Natural killer cell (primary cell): ENCODE measurements at regions of chr2 and their contacts with region 1.

Region 1: GRCh38 chr2:16756831-16757644 is 91.4 kb upstream of the CYRIA start:
- DNase-seq: peak; percentile 74 to 78
- ATAC-seq: peak; percentile 85 to 95 (median 89)
- H3K4me3 ChIP-seq: no peak overlapping the region
- H3K4me3 Mint-ChIP-seq: no peak overlapping the region
- H3K27ac ChIP-seq: no peak overlapping the region
- H3K27ac Mint-ChIP-seq: no peak overlapping the region
- H3K4me1 ChIP-seq: peaks cover 3% of the 10 kb centered on the region
- H3K4me1 Mint-ChIP-seq: no peaks in the 10 kb centered on the region
- H3K27me3 ChIP-seq: no peaks in the 10 kb centered on the region
- H3K27me3 Mint-ChIP-seq: peaks cover 0 to 5% of the 10 kb centered on the region in 2 donors
- CTCF ChIP-seq: peak; percentile 95

Region 2: DNA sequence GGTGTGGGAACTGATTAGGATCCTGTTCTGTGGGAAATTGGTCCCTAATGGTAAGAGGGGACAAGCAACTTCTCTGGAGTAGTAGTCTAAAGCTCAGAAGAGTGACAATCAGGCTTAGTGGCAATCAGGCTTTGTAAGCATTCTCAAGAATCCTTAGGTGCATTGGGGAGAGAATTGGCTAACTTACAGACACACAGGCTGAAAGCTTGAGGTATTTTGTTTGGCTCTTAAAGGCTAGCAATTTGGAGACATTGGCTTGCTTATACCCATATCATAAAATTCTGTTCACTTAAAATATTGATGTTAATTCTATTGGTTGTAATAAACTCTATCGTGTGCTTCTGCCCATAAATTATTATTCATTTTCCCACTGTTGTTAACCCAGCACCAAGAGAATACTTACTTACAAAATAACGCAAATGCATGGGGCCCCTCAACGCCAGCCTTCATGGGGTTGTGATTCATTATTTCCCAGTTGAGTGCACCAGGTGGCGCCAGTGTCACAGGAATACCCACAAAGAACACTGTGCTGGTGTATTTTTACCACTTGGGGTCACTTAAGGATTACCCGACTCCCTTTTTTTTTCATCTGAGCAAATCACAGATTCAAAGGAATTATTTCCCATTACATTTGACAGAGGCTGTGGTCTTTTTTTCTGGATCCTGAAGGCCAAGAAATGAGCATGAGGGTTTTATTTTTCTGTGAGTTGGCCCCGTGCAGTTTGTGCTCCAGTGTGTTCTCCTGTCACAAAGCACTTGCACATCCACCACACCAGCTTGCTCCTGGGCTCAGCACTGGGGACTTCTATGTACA is 1119.9 kb before region 1 on chr2:
- intact Hi-C with region 1: loop called (anchors 1 kb)
- DNase-seq: peak; percentile 29 to 75
- ATAC-seq: peak; percentile 67 to 93 (median 84)
- H3K4me3 ChIP-seq: no peak overlapping the region
- H3K4me3 Mint-ChIP-seq: no peak overlapping the region
- H3K27ac ChIP-seq: no peak overlapping the region
- H3K27ac Mint-ChIP-seq: no peak overlapping the region
- H3K4me1 ChIP-seq: no peaks in the 10 kb centered on the region
- H3K4me1 Mint-ChIP-seq: peaks cover 0 to 7% of the 10 kb centered on the region in 2 donors
- H3K27me3 ChIP-seq: no peaks in the 10 kb centered on the region
- H3K27me3 Mint-ChIP-seq: no peaks in the 10 kb centered on the region
- CTCF ChIP-seq: peak; percentile 80

Region 3: GRCh38 chr2:15939854-15940660 is 817.0 kb before region 1 on chr2 and contains the start of gene MYCN:
- intact Hi-C with region 1: loop called (anchors 2 kb)
- DNase-seq: peak in 1 of 2 donors; percentile 65
- ATAC-seq: peak in 1 of 3 donors; percentile 18
- H3K4me3 ChIP-seq: no peak within 1 kb of the TSS
- H3K4me3 Mint-ChIP-seq: peak within 1 kb of the TSS; percentile 68
- H3K27ac ChIP-seq: no peak within 1 kb of the TSS
- H3K27ac Mint-ChIP-seq: no peak within 1 kb of the TSS
- H3K4me1 ChIP-seq: peaks cover 32% of the 10 kb centered on the region
- H3K4me1 Mint-ChIP-seq: peaks cover 7% of the 10 kb centered on the region in 2 donors
- H3K27me3 ChIP-seq: peaks cover 33% of the 10 kb centered on the region
- H3K27me3 Mint-ChIP-seq: peaks cover 49 to 62% of the 10 kb centered on the region in 2 donors
- CTCF ChIP-seq: no peak
- total RNA-seq, gene MYCN: 0.18 TPM in 1 of 3 donors, not detected in the others

Region 4: DNA sequence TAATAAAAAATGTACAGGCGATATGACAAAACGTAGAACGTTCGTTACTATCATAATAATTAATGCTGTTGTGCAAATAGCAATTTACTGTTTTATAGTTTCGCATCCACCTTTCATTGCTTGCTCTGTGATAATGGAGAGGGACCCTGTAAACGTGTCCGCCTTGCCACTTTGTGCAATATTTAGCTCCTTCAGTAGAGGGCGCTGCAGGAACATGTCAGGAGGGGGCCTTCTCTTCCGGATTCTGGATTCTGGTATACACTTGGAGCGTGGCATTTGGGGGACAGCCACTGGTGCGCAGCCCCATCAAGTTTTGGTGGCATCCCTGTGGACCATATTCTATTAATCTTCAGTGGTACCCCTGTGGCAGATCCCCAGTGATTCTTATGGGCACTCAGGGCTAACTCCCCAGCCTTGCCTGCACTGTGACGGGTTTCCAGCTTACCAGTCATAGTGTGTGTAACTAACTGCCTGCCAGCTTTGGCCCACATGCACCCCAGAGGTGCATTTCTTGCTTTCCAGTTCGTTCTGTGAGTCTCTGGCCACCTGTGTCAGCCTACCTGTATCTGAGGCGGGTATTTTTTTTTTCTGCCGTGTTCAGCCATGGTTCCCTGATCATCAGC is 231.7 kb before region 1 on chr2:
- intact Hi-C with region 1: loop called (anchors 2 kb)
- DNase-seq: peak in 1 of 2 donors; percentile 15
- ATAC-seq: peak in 1 of 3 donors; percentile 47
- H3K4me3 ChIP-seq: no peak overlapping the region
- H3K4me3 Mint-ChIP-seq: no peak overlapping the region
- H3K27ac ChIP-seq: no peak overlapping the region
- H3K27ac Mint-ChIP-seq: no peak overlapping the region
- H3K4me1 ChIP-seq: no peaks in the 10 kb centered on the region
- H3K4me1 Mint-ChIP-seq: no peaks in the 10 kb centered on the region
- H3K27me3 ChIP-seq: no peaks in the 10 kb centered on the region
- H3K27me3 Mint-ChIP-seq: peaks cover 7 to 15% of the 10 kb centered on the region in 2 donors
- CTCF ChIP-seq: peak; percentile 39

Region 5: GRCh38 chr2:16553226-16553625 is 203.8 kb before region 1 on chr2:
- intact Hi-C with region 1: loop called (anchors 1 kb)
- DNase-seq: peak in 1 of 2 donors; percentile 54
- ATAC-seq: no peak
- H3K4me3 ChIP-seq: no peak overlapping the region
- H3K4me3 Mint-ChIP-seq: peak overlapping the region; percentile 5
- H3K27ac ChIP-seq: no peak overlapping the region
- H3K27ac Mint-ChIP-seq: no peak overlapping the region
- H3K4me1 ChIP-seq: no peaks in the 10 kb centered on the region
- H3K4me1 Mint-ChIP-seq: no peaks in the 10 kb centered on the region
- H3K27me3 ChIP-seq: no peaks in the 10 kb centered on the region
- H3K27me3 Mint-ChIP-seq: no peaks in the 10 kb centered on the region
- CTCF ChIP-seq: peak; percentile 77

Region 6: DNA sequence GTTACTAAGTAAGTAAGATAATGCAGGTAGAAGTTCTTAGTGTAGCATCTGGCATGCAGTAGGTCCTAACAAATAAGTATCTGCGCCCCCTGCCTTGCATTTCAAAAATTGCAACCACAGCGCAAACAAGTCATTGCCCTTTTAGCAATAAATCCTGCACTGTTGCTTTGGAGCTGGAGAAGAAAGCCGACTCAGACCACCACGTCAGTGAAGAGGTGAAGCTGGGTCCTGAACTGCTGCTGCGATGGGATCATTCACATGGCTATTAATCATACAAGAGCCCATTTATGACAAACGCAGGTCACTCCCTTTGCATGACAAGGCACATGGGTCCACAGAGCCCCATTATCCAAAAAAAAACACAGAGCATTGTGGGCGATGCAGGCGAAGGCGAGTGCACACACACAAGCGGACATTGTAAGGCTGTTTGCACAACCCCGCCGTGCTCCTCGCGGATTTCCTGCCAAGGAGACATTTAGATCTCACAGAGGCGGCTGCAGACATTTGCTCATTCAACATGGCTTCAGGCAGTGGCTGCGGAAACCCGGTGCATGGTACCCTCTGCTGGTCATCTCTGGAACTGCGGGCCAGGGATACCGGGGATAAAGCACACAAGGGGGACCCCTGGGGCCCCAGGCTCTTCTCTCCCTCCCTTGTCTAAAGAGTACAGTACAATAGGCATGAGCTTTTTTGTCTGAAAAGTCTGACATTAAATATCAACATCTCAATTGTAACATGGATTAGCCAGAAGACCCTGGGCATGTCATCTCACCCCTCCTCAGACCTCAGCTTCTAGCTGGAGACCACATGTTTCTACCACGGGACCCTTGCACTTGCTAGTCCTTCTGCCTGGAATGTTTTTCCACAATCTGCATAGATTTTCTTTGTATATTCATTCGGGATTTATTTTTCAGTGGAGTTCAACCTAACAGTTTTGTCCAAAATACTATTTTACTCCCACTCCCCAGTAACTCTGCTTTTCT is 148.1 kb before region 1 on chr2:
- intact Hi-C with region 1: loop called (anchors 1 kb)
- DNase-seq: peak; percentile 86 to 88
- ATAC-seq: peak; percentile 96
- H3K4me3 ChIP-seq: peak overlapping the region; percentile 33
- H3K4me3 Mint-ChIP-seq: peak overlapping the region; percentile 89
- H3K27ac ChIP-seq: no peak overlapping the region
- H3K27ac Mint-ChIP-seq: peak overlapping the region; percentile 3 to 63
- H3K4me1 ChIP-seq: peaks cover 5% of the 10 kb centered on the region
- H3K4me1 Mint-ChIP-seq: peaks cover 32 to 51% of the 10 kb centered on the region in 2 donors
- H3K27me3 ChIP-seq: no peaks in the 10 kb centered on the region
- H3K27me3 Mint-ChIP-seq: no peaks in the 10 kb centered on the region
- CTCF ChIP-seq: peak; percentile 96